Motor neuron (in vitro differentiated cells): ENCODE measurements at regions of chr1 and their contacts with region 1.

Region 1: GRCh38 chr1:99808391-99809115 is 41.6 kb upstream of the AGL start:
- ATAC-seq: peak; percentile 89 to 98 (median 96)
- H3K4me3 ChIP-seq: no peak overlapping the region
- H3K27ac ChIP-seq: no peak overlapping the region
- H3K4me1 ChIP-seq: peaks cover 3 to 7% of the 10 kb centered on the region in 2 donors

Region 2: GRCh38 chr1:100037927-100038659 is 229.5 kb after region 1 on chr1:
- in situ Hi-C with region 1: loop called in 1 of 9 experiments (anchors 25 kb)
- ATAC-seq: peak; percentile 77 to 96 (median 94)
- H3K4me3 ChIP-seq: peak overlapping the region; percentile 64 to 86 (median 74)
- H3K27ac ChIP-seq: peak overlapping the region; percentile 94 to 96
- H3K4me1 ChIP-seq: peaks cover 6 to 22% of the 10 kb centered on the region in 2 donors

Region 3: GRCh38 chr1:100077531-100077930 is 269.0 kb after region 1 on chr1:
- in situ Hi-C with region 1: no loop called
- ATAC-seq: no peak
- H3K4me3 ChIP-seq: no peak overlapping the region
- H3K27ac ChIP-seq: no peak overlapping the region
- H3K4me1 ChIP-seq: no peaks in the 10 kb centered on the region

Region 4: DNA sequence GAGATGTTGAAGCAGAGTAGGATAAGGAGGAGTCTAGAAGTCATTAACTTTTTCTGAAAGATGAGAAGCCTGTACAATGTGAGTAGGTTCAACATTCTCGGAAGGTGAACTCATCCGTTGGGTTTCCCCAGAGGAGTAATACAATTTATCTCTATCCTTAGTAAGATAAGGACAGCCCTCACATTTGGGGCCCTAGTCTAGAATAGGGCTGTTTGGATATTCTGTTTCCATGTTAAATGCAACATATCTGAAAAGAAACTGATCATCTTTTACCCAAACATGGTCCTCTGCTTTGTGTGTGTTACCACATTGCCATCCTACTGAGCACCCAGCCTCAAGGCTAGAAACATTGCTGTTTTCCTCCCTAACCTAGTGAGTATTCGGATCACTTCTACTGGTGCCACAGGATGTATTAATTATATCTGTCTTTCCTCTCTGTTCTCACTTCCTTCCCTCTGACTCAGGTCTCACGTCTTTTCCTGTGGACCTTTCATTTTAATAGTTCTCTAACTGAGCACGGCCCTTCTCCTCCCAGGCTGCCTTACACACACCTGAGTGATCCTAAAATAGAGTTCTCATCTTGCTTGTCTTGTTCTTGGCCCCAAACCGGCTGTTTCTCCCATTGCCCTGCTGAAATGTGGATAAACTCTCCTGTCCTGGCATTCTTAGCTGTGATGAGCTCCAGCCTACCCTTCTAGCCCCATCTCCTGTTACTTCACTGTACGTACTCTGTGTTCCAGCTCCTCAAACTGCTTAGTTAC is 635.4 kb after region 1 on chr1:
- in situ Hi-C with region 1: loop called in 1 of 9 experiments (anchors 25 kb)
- ATAC-seq: no peak
- H3K4me3 ChIP-seq: no peak overlapping the region
- H3K27ac ChIP-seq: no peak overlapping the region
- H3K4me1 ChIP-seq: peaks cover 13 to 22% of the 10 kb centered on the region in 2 donors

Region 5: GRCh38 chr1:100459358-100460114 is 651.0 kb after region 1 on chr1:
- in situ Hi-C with region 1: loop called in 6 of 9 experiments (anchors 25 kb)
- ATAC-seq: peak; percentile 85 to 98 (median 86)
- H3K4me3 ChIP-seq: no peak overlapping the region
- H3K27ac ChIP-seq: no peak overlapping the region
- H3K4me1 ChIP-seq: peaks cover 18 to 21% of the 10 kb centered on the region in 2 donors